Mammary epithelial cell (primary cell): ENCODE measurements at regions of chr7 and their contacts with region 1.

Region 1: GRCh38 chr7:95794917-95795515 is 22.7 kb downstream of the DYNC1I1 start:
- DNase-seq: no peak
- H3K4me3 ChIP-seq: no peak overlapping the region
- H3K27ac ChIP-seq: no peak overlapping the region
- H3K4me1 ChIP-seq: no peaks in the 10 kb centered on the region
- H3K27me3 ChIP-seq: no peaks in the 10 kb centered on the region
- CTCF ChIP-seq: peak; percentile 55 to 72

Region 2: GRCh38 chr7:95723592-95724180 is 71.3 kb before region 1 on chr7:
- CTCF ChIA-PET with region 1: interaction called, 5 read pairs
- dilution Hi-C with region 1: no loop called
- in situ Hi-C with region 1: no loop called
- intact Hi-C with region 1: loop called (anchors 1 kb)
- DNase-seq: peak; percentile 22
- H3K4me3 ChIP-seq: no peak overlapping the region
- H3K27ac ChIP-seq: no peak overlapping the region
- H3K4me1 ChIP-seq: no peaks in the 10 kb centered on the region
- H3K27me3 ChIP-seq: no peaks in the 10 kb centered on the region
- CTCF ChIP-seq: peak; percentile 40 to 67